Ovary (tissue), 10 donors: ENCODE measurements at regions of chr1 and their contacts with region 1.

Region 1: GRCh38 chr1:19529664-19530063 is 44.3 kb upstream of the CAPZB start:
- DNase-seq: no peak
- H3K4me3 ChIP-seq: no peak overlapping the region
- H3K27ac ChIP-seq: no peak overlapping the region
- H3K4me1 ChIP-seq: no peaks in the 10 kb centered on the region
- H3K27me3 ChIP-seq: no peaks in the 10 kb centered on the region
- CTCF ChIP-seq: no peak
- EP300 ChIP-seq: no peak
- POLR2A ChIP-seq: no peak

Region 2: DNA sequence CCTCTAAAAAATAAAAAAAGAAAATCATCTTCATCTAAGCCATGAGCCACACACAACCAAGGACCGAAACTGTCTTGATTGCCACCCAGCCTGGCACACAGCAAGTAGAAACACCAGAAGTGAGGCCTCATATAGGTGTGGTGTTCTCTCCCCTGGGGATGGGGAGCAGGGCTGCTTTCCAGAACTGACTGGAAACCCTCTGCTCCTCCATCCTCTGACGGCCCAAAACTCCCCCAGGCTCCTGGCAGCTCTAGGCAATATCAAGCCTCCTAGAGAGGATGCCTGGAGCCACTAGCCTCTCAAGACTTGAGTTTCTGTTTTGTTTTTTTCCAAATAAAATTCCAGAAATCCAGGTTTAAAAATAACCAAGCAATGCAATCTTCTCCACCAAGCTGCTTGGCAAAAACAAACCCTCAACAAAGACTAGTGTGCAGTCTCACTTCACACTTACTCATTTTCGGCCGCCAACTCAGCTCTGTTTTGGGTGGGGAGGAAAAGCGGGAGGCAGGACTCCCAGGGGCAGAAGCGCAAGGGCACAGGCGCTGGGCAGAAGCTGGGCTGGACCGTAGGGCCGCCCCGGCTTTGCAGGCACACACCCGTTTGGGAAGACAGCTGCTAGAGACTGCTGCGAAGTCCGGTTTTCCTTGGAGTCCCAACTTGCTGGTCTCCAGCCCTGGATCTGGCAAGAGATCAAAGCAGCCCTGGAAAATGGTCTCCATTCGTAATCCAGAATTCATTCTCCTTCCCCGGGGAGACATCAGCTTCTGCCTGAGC is 33.8 kb after region 1 on chr1:
- intact Hi-C with region 1: loop called in 1 of 4 experiments (anchors 5 kb)
- DNase-seq: peak; percentile 78 to 82 (median 81)
- H3K4me3 ChIP-seq: peak overlapping the region; percentile 33
- H3K27ac ChIP-seq: peak overlapping the region; percentile 77 to 82
- H3K4me1 ChIP-seq: peaks cover 5% of the 10 kb centered on the region
- H3K27me3 ChIP-seq: no peaks in the 10 kb centered on the region
- CTCF ChIP-seq: no peak
- EP300 ChIP-seq: no peak
- POLR2A ChIP-seq: peak; percentile 28

Region 3: GRCh38 chr1:20867847-20868246 is 1338.2 kb after region 1 on chr1:
- intact Hi-C with region 1: no loop called
- DNase-seq: no peak
- H3K4me3 ChIP-seq: no peak overlapping the region
- H3K27ac ChIP-seq: no peak overlapping the region
- H3K4me1 ChIP-seq: no peaks in the 10 kb centered on the region
- H3K27me3 ChIP-seq: no peaks in the 10 kb centered on the region
- CTCF ChIP-seq: no peak
- EP300 ChIP-seq: no peak
- POLR2A ChIP-seq: no peak